Activated CD8-positive, alpha-beta T cell treated with anti-CD3 and anti-CD28 coated beads for 36 hours (primary cell): ENCODE measurements at regions of chr14 and their contacts with region 1.

Region 1: DNA sequence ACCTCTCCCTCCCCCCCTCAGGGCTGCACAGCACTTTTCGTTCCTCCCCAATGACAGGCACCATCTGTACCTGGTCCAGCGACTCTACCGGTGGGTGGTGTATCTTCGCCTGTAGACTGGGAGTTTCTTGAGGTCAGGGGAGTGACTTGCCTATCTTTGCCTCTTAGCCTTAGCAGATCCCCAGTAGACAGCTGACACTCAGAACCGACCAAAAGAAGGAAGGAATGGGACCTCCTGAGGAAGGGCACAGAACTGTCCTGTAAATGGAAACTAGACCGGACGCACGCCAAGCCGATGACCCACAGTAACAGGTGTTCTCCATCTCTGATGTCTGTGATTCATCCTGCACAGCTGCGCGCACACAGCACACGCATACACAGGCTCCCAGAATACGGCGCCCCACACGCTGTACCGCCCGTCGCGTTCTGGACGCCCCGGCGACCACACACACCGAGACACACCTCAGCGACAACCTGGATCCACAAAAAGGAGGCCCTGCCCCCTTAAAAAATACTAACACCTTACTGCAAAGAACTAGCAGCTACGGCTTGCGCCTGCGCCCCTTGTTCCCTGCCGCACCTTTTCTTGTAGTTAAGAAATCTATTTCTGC is 673 bp upstream of the TTC9 start:
- DNase-seq: peak; percentile 78
- ATAC-seq: peak; percentile 81
- H3K4me3 Mint-ChIP-seq: peak overlapping the region; percentile 88
- H3K27ac Mint-ChIP-seq: peak overlapping the region; percentile 86
- H3K4me1 Mint-ChIP-seq: peaks cover 36% of the 10 kb centered on the region
- H3K27me3 Mint-ChIP-seq: no peaks in the 10 kb centered on the region
- CTCF ChIP-seq: no peak

Region 2: DNA sequence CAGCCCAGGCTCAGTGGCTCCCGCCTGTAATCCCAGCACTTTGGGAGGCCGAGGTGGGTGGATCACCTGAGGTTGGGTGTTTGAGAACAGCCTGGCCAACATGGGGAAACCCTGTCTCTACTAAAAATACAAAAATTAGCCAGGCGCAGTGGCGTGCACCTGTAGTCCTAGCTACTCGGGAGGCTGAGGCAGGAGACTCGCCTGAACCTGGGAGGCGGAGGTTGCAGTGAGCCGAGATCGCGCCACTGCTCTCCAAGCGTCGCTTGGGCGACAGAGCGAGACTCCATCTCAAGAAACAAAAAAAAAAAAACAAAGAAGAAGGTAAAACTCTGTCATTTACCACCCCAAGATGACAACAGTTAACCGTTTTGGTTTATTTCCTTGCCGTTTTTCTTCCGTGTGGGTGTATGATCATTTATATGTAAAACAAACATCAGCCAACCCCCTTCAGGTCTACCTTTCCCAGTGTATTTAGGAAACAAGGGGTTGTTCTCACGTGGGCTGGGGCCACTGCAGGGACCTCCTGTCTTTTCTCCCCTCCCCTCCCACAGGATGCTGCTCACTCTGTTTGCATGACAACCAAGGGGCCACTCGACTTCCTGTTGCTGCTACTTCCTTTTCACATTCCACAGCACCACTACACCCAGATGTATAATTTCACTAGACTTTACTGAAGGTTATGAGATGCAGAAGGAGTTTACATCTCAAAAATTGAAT is 14.2 kb after region 1 on chr14:
- CTCF ChIA-PET with region 1: interaction called, 6 read pairs
- POLR2A ChIA-PET with region 1: interaction called, 46 read pairs
- intact Hi-C with region 1: no loop called
- DNase-seq: peak; percentile 89
- ATAC-seq: peak; percentile 82
- H3K4me3 Mint-ChIP-seq: peak overlapping the region; percentile 76
- H3K27ac Mint-ChIP-seq: peak overlapping the region; percentile 98
- H3K4me1 Mint-ChIP-seq: peaks cover 88% of the 10 kb centered on the region
- H3K27me3 Mint-ChIP-seq: no peaks in the 10 kb centered on the region
- CTCF ChIP-seq: no peak

Region 3: DNA sequence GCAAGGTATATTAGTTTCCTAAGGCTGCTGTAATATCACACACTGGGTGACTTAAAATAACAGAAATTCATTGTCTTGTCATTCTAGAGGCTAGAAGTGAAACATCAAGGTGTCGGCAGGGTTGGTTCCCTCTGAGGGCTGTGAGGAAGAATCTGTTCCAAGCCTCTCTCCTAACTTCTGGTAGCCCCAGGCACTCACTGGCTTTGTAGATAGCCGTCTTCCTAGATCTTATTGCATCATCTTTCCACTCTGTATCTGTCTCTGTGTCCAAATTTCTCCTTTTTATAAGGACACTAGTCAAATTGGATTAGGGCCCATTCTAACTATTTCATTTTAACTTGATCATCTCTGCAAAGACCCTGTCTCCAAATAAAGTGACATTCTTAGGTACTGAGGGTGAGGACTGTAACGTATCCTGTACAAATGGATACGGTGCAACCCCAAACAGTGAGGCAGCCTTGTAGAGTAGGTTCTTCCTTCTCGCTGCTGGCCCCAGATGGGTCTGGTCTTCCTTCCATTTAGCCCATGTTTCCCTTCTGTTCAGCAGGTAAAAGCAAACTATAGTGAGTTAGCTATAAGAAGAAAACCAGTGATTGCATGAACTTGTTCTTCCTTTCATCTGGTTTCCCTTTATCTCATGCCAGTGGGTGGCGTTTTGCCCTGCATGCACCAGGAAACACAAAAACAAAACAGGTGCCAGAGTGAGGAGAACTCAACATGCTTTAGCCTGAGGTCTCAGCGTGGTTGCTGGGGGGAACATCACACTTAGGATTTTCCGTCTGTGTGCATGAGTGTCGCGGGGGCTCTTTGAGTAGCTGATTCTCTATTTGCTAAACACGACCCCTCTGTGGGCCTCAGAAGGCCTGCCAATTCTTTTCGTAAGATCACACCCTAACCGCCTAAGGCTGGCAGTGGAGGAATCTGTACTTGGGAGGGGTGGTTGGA is 20.2 kb after region 1 on chr14:
- CTCF ChIA-PET with region 1: interaction called, 7 read pairs
- POLR2A ChIA-PET with region 1: interaction called, 21 read pairs
- intact Hi-C with region 1: no loop called
- DNase-seq: peak; percentile 70
- ATAC-seq: peak; percentile 69
- H3K4me3 Mint-ChIP-seq: peak overlapping the region; percentile 59
- H3K27ac Mint-ChIP-seq: peak overlapping the region; percentile 98
- H3K4me1 Mint-ChIP-seq: peaks cover 94% of the 10 kb centered on the region
- H3K27me3 Mint-ChIP-seq: no peaks in the 10 kb centered on the region
- CTCF ChIP-seq: no peak

Region 4: DNA sequence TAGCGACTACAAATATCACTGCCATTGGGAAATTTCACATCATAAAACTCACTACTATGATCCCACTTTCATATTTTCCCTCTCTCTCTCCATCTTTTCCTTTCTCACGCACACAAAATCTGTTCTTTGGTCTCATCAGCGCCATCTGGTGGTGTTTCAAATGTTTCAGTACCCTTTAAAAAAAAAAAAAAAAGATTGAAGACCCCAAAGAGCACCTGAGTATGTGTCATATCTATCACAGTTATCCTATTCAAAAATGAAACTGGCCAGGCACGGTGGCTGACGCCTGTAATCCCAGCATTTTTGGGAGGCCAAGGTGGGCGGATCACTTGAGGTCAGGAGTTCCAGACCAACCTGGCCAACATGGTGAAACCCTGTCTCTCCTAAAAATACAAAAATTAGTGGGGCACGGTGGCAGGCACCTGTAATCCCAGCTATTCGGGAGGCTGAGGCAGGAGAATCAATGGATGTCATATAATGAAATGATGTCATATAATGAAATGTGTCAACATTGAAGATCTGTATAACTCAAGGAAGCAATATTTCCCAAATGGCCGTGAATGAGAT is 73.1 kb after region 1 on chr14:
- CTCF ChIA-PET with region 1: interaction called, 16 read pairs
- POLR2A ChIA-PET with region 1: interaction called, 3 read pairs
- intact Hi-C with region 1: no loop called
- DNase-seq: peak; percentile 70
- ATAC-seq: peak; percentile 64
- H3K4me3 Mint-ChIP-seq: no peak overlapping the region
- H3K27ac Mint-ChIP-seq: no peak overlapping the region
- H3K4me1 Mint-ChIP-seq: peaks cover 2% of the 10 kb centered on the region
- H3K27me3 Mint-ChIP-seq: no peaks in the 10 kb centered on the region
- CTCF ChIP-seq: peak; percentile 97

Region 5: DNA sequence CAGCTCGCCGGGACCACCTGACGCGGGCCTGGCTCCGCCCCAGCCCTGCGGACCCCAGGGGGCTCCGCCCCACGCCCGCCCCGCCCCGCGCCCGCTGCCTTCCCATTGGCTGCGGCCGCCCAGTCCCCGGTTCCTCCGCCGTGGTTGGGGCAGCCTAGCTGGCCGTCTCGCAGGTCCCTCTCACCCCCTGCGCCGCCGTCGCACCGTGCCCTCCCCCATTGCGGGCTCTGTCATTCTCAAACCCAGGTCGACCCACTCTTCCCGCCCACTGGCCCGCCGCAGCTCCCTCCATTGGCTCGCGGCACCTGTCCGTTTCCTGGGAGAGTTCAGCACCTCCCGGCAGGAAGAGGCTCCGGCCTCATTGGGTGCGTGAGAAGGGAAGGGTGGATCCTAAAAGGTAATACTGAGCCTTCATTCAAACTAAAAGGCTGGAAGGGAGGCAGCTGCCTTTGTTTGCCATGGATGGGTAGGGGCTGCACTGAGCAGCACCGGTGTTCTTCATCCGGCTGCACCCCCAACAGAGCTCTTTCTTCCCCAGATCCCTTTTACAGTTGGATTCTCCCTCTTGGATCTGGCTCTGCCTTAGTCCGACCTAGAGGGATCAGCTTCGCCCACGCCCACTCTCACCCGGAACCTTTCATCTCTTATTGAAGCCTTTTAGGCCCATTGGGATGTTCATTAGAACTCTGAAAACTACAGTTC is 168.7 kb after region 1 on chr14:
- CTCF ChIA-PET with region 1: interaction called, 4 read pairs
- POLR2A ChIA-PET with region 1: interaction called, 7 read pairs
- intact Hi-C with region 1: loop called (anchors 10 kb)
- DNase-seq: peak; percentile 97
- ATAC-seq: peak; percentile 88
- H3K4me3 Mint-ChIP-seq: no peak overlapping the region
- H3K27ac Mint-ChIP-seq: peak overlapping the region; percentile 87
- H3K4me1 Mint-ChIP-seq: peaks cover 14% of the 10 kb centered on the region
- H3K27me3 Mint-ChIP-seq: no peaks in the 10 kb centered on the region
- CTCF ChIP-seq: no peak

Region 6: DNA sequence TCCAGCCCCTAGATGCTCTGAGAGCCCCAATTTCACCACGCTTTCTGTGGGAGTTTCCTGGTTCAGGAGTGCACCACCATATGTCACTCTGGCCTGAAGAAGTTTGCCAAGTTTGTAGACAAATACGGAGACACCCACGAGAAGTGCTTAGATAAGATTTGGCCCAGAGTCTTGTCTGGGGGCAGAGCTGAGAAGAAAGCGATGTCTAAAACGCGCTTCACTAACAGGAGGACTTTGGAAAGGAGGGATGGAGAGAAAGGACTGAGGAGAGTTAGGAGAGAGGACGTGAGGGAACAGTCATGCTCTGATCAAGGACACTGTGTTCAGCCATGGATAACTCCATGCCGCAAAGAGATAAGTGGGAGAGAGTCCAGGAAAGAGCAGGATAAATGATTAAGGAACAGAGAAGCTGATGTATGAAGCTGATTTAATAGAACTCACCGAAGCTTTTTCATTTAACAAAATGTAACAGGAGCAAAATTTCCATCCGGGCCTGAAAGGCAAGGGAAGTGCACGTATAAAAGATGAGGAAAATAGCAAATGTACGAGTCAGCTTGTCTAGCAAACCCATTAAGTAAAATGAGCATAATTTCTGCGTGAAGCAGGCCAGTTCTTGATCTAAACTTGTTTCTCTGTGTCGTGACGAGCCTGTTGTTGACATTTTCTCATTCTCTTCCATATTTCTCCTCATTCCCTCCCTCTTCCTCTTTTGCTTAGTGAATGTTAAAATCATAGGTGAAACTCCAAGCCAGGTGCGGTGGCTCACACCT is 191.7 kb after region 1 on chr14:
- CTCF ChIA-PET with region 1: no interaction called
- POLR2A ChIA-PET with region 1: no interaction called
- intact Hi-C with region 1: no loop called
- DNase-seq: no peak
- ATAC-seq: no peak
- H3K4me3 Mint-ChIP-seq: no peak overlapping the region
- H3K27ac Mint-ChIP-seq: no peak overlapping the region
- H3K4me1 Mint-ChIP-seq: no peaks in the 10 kb centered on the region
- H3K27me3 Mint-ChIP-seq: no peaks in the 10 kb centered on the region
- CTCF ChIP-seq: no peak

Region 7: DNA sequence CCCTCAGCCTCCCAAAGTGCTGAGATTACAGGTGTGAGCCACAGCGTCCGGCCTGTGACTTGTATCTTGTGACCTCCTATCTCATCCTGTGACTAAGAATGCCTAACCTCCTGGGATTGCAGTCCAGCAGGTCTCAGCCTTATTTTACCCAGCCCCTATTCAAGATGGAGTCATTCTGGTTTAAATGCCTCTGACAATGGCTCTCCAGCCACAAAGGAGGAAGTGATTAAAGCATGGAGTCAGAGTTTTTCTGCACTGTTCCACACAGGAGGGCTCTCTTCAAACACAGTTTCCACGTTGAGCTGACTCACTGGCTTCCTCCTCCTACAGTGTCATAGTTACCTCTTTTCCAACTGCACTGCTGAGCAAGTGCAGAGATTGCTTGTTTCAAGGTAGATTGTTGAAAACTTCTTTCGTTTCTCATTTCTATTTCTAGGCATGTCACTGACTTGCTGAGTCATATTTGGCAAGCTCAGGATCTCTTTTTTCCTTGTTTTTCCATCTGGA is 650.0 kb after region 1 on chr14:
- CTCF ChIA-PET with region 1: no interaction called
- POLR2A ChIA-PET with region 1: no interaction called
- intact Hi-C with region 1: no loop called
- DNase-seq: peak; percentile 72
- ATAC-seq: peak; percentile 98
- H3K4me3 Mint-ChIP-seq: no peak overlapping the region
- H3K27ac Mint-ChIP-seq: peak overlapping the region; percentile 72
- H3K4me1 Mint-ChIP-seq: peaks cover 19% of the 10 kb centered on the region
- H3K27me3 Mint-ChIP-seq: no peaks in the 10 kb centered on the region
- CTCF ChIP-seq: no peak